CD4-positive, alpha-beta memory T cell (primary cell): ENCODE measurements at regions of chr9 and their contacts with region 1.

Region 1: GRCh38 chr9:34048923-34049697 is 423 bp upstream of the UBAP2 start:
- DNase-seq: peak; percentile 97 to 99 (median 97)
- H3K4me3 ChIP-seq: peak overlapping the region; percentile 90 to 100
- H3K4me3 Mint-ChIP-seq: peak overlapping the region; percentile 95 to 99 (median 98)
- H3K27ac ChIP-seq: peak overlapping the region; percentile 88
- H3K27ac Mint-ChIP-seq: peak overlapping the region; percentile 98 to 100 (median 99)
- H3K4me1 ChIP-seq: peaks cover 27% of the 10 kb centered on the region
- H3K4me1 Mint-ChIP-seq: peaks cover 23 to 43% (median 31%) of the 10 kb centered on the region in 4 donors
- H3K27me3 ChIP-seq: no peaks in the 10 kb centered on the region
- H3K27me3 Mint-ChIP-seq: no peaks in the 10 kb centered on the region

Region 2: GRCh38 chr9:33264473-33265177 is 784.5 kb before region 1 on chr9 and contains the starts of genes BAG1 and CHMP5:
- CTCF ChIA-PET with region 1: no interaction called
- POLR2A ChIA-PET with region 1: no interaction called
- intact Hi-C with region 1: loop called (anchors 10 kb)
- DNase-seq: peak; percentile 99 to 100 (median 100)
- H3K4me3 ChIP-seq: peak within 1 kb of the TSS; percentile 71 to 85
- H3K4me3 Mint-ChIP-seq: peak within 1 kb of the TSS; percentile 95 to 100 (median 97)
- H3K27ac ChIP-seq: peak within 1 kb of the TSS; percentile 76
- H3K27ac Mint-ChIP-seq: peak within 1 kb of the TSS; percentile 90 to 99 (median 98)
- H3K4me1 ChIP-seq: peaks cover 38% of the 10 kb centered on the region
- H3K4me1 Mint-ChIP-seq: peaks cover 38 to 53% (median 44%) of the 10 kb centered on the region in 4 donors
- H3K27me3 ChIP-seq: no peaks in the 10 kb centered on the region
- H3K27me3 Mint-ChIP-seq: no peaks in the 10 kb centered on the region
- total RNA-seq, gene BAG1: 53.5 to 56.3 TPM
- total RNA-seq, gene CHMP5: 32.3 to 35.0 TPM

Region 3: GRCh38 chr9:34072868-34073590 is 23.9 kb after region 1 on chr9:
- CTCF ChIA-PET with region 1: interaction called, 11 read pairs
- POLR2A ChIA-PET with region 1: no interaction called
- intact Hi-C with region 1: no loop called
- DNase-seq: no peak
- H3K4me3 ChIP-seq: no peak overlapping the region
- H3K4me3 Mint-ChIP-seq: no peak overlapping the region
- H3K27ac ChIP-seq: no peak overlapping the region
- H3K27ac Mint-ChIP-seq: peak overlapping the region in 3 of 7 donors; percentile 37 to 89 (median 67)
- H3K4me1 ChIP-seq: no peaks in the 10 kb centered on the region
- H3K4me1 Mint-ChIP-seq: peaks cover 0 to 3% (median 2%) of the 10 kb centered on the region in 4 donors
- H3K27me3 ChIP-seq: no peaks in the 10 kb centered on the region
- H3K27me3 Mint-ChIP-seq: no peaks in the 10 kb centered on the region

Region 4: DNA sequence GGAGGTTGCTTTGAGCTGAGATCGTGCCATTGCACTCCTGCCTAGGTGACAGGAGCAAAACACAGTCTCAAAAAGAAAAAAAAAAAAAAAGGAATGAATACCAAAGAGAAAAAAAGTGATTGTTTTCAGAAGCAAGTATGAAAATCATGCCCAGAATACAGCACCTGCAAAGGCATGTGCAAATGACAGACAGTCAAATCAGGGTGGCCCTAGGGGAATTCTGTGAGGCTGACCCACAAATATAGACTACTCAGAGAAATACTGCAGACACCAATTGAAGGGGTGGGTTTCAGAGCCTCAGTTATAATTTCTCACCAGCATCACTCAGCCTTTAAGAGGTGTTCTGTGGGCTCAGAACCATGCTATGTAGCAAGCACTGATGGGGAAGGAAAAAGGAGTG is 48.8 kb after region 1 on chr9:
- CTCF ChIA-PET with region 1: no interaction called
- POLR2A ChIA-PET with region 1: no interaction called
- intact Hi-C with region 1: no loop called
- DNase-seq: no peak
- H3K4me3 ChIP-seq: no peak overlapping the region
- H3K4me3 Mint-ChIP-seq: no peak overlapping the region
- H3K27ac ChIP-seq: no peak overlapping the region
- H3K27ac Mint-ChIP-seq: peak overlapping the region in 3 of 7 donors; percentile 29 to 61 (median 43)
- H3K4me1 ChIP-seq: no peaks in the 10 kb centered on the region
- H3K4me1 Mint-ChIP-seq: peaks cover 0 to 3% (median 0%) of the 10 kb centered on the region in 4 donors
- H3K27me3 ChIP-seq: no peaks in the 10 kb centered on the region
- H3K27me3 Mint-ChIP-seq: no peaks in the 10 kb centered on the region

Region 5: GRCh38 chr9:34145165-34145564 is 96.1 kb after region 1 on chr9:
- CTCF ChIA-PET with region 1: no interaction called
- POLR2A ChIA-PET with region 1: no interaction called
- intact Hi-C with region 1: no loop called
- DNase-seq: no peak
- H3K4me3 ChIP-seq: no peak overlapping the region
- H3K4me3 Mint-ChIP-seq: no peak overlapping the region
- H3K27ac ChIP-seq: no peak overlapping the region
- H3K27ac Mint-ChIP-seq: no peak overlapping the region
- H3K4me1 ChIP-seq: no peaks in the 10 kb centered on the region
- H3K4me1 Mint-ChIP-seq: no peaks in the 10 kb centered on the region
- H3K27me3 ChIP-seq: no peaks in the 10 kb centered on the region
- H3K27me3 Mint-ChIP-seq: no peaks in the 10 kb centered on the region

Region 6: GRCh38 chr9:34178520-34179212 is 129.6 kb after region 1 on chr9 and contains the start of gene UBAP1:
- CTCF ChIA-PET with region 1: no interaction called
- POLR2A ChIA-PET with region 1: interaction called, 4 read pairs
- intact Hi-C with region 1: loop called (anchors 2 kb)
- DNase-seq: peak; percentile 93 to 98 (median 94)
- H3K4me3 ChIP-seq: peak within 1 kb of the TSS; percentile 57 to 74
- H3K4me3 Mint-ChIP-seq: peak within 1 kb of the TSS; percentile 91 to 100 (median 99)
- H3K27ac ChIP-seq: peak within 1 kb of the TSS; percentile 94
- H3K27ac Mint-ChIP-seq: peak within 1 kb of the TSS; percentile 85 to 100 (median 100)
- H3K4me1 ChIP-seq: peaks cover 18% of the 10 kb centered on the region
- H3K4me1 Mint-ChIP-seq: peaks cover 13 to 27% (median 15%) of the 10 kb centered on the region in 4 donors
- H3K27me3 ChIP-seq: no peaks in the 10 kb centered on the region
- H3K27me3 Mint-ChIP-seq: no peaks in the 10 kb centered on the region
- total RNA-seq, gene UBAP1: 34.8 to 36.3 TPM

Region 7: DNA sequence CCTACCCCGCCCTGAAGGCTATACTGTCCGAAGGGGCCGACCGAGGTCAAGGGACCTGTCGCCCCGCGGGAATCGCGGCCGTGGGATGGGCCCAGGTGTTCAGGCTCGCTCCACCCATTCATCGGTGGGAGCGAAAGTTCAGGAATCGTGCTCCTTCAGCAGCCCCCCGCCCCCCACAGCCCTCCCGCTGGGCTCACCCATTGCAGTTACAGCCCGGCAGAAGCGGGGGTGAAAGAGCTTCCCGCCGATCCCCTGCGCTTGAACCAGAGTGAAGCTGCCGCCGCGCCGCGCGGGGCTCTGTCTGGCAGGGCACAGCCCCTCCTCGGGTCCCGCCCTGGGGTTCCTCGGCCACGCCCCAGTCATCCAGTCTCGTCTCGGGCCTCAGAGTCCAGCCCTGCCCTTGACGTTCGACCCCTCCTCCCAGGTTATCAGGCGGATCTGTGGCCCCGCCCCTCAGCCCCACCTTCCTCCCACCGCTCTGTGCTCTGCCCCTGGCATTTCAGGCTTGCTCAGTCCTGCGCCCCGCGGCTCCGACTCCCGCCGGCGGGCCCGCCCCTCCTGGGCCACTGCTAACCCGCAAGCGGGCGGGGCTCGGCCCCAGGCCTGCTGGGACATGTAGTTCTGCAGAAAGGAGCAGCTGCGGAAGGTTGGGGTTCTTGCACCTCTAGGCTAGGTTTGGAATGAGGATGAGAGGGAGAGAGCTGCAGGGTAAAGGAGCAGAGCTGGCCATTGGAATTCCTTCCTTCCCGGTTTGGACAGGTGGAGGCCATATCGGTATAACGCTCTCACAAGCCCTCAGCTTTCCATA is 327.7 kb after region 1 on chr9 and contains the start of gene MYORG:
- CTCF ChIA-PET with region 1: no interaction called
- POLR2A ChIA-PET with region 1: interaction called, 7 read pairs
- intact Hi-C with region 1: loop called (anchors 1 kb)
- DNase-seq: peak; percentile 94 to 98 (median 96)
- H3K4me3 ChIP-seq: peak within 1 kb of the TSS; percentile 70 to 77
- H3K4me3 Mint-ChIP-seq: peak within 1 kb of the TSS; percentile 92 to 98 (median 94)
- H3K27ac ChIP-seq: peak within 1 kb of the TSS; percentile 49
- H3K27ac Mint-ChIP-seq: peak within 1 kb of the TSS; percentile 58 to 97 (median 93)
- H3K4me1 ChIP-seq: peaks cover 39% of the 10 kb centered on the region
- H3K4me1 Mint-ChIP-seq: peaks cover 33 to 54% (median 44%) of the 10 kb centered on the region in 4 donors
- H3K27me3 ChIP-seq: no peaks in the 10 kb centered on the region
- H3K27me3 Mint-ChIP-seq: no peaks in the 10 kb centered on the region
- total RNA-seq, gene MYORG: 1.3 to 1.4 TPM